ENCODE measurements at regions of chr3 and their contacts with region 1.

Region 1: GRCh38 chr3:124786441-124787241 is 56.4 kb downstream of the UMPS start:
- DNase-seq: peak; percentile 24
- H3K27ac ChIP-seq: peak overlapping the region; percentile 17; the same call in 1 of the 2 replicates
- CTCF ChIP-seq: peak; percentile 27; the same call in 1 of the 2 replicates

Region 2: DNA sequence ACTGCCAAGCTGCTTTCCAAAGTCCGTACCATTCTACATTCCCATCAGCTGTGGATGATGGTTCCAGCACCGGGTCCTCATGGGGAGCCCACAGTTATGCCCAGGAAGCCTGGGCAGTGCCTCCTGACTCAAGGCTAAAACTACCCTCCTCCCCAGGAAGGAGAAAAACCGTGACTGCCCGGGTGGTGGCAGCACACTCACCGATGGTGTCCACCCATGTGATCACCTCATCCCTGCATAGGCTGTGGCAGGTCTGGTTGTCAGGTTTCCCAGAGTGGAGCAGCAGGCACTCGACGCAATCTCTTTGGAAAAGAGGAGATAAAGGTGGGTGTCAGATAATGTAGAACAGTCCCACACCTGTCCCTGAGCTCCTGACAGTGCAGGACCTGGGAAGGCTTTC is 17.8 kb before region 1 on chr3:
- CTCF ChIA-PET with region 1: interaction called, 18 read pairs
- POLR2A ChIA-PET with region 1: no interaction called
- DNase-seq: peak; percentile 65
- H3K27ac ChIP-seq: no peak overlapping the region
- CTCF ChIP-seq: no peak

Region 3: DNA sequence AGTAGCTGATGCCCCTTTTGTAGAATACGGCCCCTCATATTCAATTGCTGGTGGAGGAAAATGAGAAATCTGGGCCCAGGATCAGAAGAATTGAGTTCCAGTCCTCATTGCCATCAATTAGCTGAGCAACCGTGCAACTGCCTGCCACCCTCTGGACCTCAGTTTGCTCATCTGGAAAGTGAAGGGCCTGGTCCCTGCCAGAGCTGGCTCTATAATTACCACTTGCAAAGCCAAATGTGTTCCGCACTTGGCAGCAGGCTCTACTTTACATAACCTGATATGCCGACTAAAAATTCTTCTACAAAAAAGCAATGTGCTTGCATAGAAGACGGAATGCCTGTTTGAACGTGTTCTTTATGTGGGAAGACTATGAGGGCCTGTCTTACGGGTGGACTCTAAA is 109.1 kb after region 1 on chr3:
- CTCF ChIA-PET with region 1: interaction called, 48 read pairs
- POLR2A ChIA-PET with region 1: no interaction called
- DNase-seq: no peak
- H3K27ac ChIP-seq: no peak overlapping the region
- CTCF ChIP-seq: no peak

Region 4: DNA sequence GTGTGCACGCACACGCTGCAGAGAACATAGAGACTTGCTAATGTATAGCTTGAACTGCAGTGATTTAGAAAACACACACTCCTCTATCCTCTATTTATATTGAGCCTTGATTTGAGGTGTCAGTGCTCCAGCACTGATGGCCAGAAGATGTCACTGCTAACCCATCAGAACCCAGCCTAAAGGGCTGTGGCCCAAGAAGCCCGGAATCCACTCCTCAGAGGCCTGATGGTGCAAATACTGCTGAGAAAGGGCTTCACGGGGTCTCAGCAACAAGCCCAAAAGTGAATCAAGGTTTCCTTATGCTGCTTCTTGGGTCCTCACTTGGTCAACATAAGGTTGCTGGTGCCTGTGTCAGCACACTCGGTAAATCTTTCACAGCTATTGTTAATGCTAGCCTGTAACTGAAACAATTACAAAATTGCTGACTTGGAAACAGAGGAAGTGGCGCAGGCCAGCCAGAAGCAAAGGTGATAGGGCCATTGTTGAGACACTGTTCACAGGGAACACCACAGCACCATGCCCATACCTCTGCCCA is 208.9 kb after region 1 on chr3:
- CTCF ChIA-PET with region 1: interaction called, 11 read pairs
- POLR2A ChIA-PET with region 1: no interaction called
- DNase-seq: peak; percentile 57
- H3K27ac ChIP-seq: peak overlapping the region; percentile 41
- CTCF ChIP-seq: peak; percentile 68